ENCODE measurements at regions of chr2 and their contacts with region 1.

Region 1: GRCh38 chr2:200829258-200829655 is 17.5 kb downstream of the BZW1 start:
- DNase-seq: no peak
- ATAC-seq: peak; percentile 23 to 40; a peak in 4 of 6 replicates
- H3K4me3 ChIP-seq: no peak overlapping the region
- H3K27ac ChIP-seq: no peak overlapping the region
- H3K4me1 ChIP-seq: peaks cover 3% of the 10 kb centered on the region; the same call in 1 of the 3 replicates
- CTCF ChIP-seq: no peak
- EP300 ChIP-seq: no peak
- POLR2A ChIP-seq: no peak
- RAD21 ChIP-seq: no peak

Region 2: GRCh38 chr2:200850512-200851256 is 21.4 kb after region 1 on chr2:
- CTCF ChIA-PET with region 1: interaction called, 3 read pairs
- POLR2A ChIA-PET with region 1: interaction called, 11 read pairs
- DNase-seq: no peak
- ATAC-seq: peak in 1 of 2 experiments; percentile 6; a peak in 2 of 6 replicates
- H3K4me3 ChIP-seq: no peak overlapping the region
- H3K27ac ChIP-seq: no peak overlapping the region
- H3K4me1 ChIP-seq: no peaks in the 10 kb centered on the region
- CTCF ChIP-seq: no peak
- EP300 ChIP-seq: no peak
- POLR2A ChIP-seq: no peak
- RAD21 ChIP-seq: no peak

Region 3: DNA sequence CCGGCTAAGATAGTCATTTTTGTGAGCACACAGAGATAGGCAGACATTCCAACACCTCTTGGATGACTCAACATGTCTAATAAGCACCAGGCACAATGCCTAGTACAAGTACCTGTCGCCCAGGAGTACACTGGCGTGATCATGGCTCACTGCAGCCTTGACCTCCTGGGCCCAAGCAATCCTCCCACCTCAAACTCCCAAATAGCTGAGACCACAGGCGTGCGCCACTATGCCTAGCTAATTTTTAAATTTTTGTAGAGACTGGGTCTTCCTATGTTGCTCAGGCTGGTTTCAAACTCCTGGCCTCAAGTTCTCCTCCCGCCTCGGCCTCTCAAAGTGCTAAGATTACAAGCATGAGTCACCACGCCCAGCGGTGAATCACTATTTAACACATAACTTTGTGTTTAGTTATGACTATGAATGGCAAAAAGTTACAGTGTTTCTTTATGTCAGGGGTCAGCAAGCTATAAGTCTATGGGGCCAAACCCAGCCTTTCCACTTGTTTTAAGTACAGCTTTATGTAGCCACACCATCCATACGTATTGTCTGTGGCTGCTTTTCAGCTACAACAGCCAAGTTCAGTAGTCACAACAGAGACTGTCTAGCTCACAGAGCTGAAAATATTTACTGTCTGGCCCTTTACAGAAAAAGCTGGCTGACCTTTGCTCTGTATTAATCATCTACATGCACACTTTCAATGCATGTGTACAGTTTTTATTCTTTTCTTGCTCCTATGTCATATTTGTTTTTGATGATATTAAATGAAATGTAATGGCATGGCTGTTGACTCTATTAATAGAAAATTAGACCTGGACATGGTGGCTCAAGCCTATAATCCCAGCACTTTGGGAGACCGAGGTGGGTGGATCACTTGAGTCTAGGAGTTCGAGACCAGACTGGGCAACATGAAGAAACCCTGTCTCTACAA is 115.5 kb after region 1 on chr2:
- CTCF ChIA-PET with region 1: no interaction called
- POLR2A ChIA-PET with region 1: no interaction called
- DNase-seq: peak; percentile 31 to 93
- ATAC-seq: peak; percentile 96 to 99
- H3K4me3 ChIP-seq: peak overlapping the region; percentile 24; the same call in 1 of the 3 replicates
- H3K27ac ChIP-seq: peak overlapping the region; percentile 82 to 85
- H3K4me1 ChIP-seq: peaks cover 32% of the 10 kb centered on the region
- CTCF ChIP-seq: no peak
- EP300 ChIP-seq: peak in 1 of 2 experiments; percentile 62; a peak in 1 of 5 replicates
- POLR2A ChIP-seq: no peak
- RAD21 ChIP-seq: 0 out of 5 replicates have a peak, but pooled peaks of 1 of the 2 experiments have one; percentile 18